Right ventricle myocardium inferior (tissue), 1 donor: ENCODE measurements at regions of chr4 and their contacts with region 1.

Region 1: GRCh38 chr4:141346144-141346543 is 125.4 kb downstream of the ZNF330 start:
- DNase-seq: no peak
- ATAC-seq: peak; percentile 65

Region 2: GRCh38 chr4:141158219-141158618 is 187.9 kb before region 1 on chr4:
- intact Hi-C with region 1: no loop called
- DNase-seq: no peak
- ATAC-seq: no peak

Region 3: GRCh38 chr4:141643557-141643956 is 297.4 kb after region 1 on chr4:
- intact Hi-C with region 1: loop called (anchors 10 kb)
- DNase-seq: no peak
- ATAC-seq: no peak

Region 4: GRCh38 chr4:141711014-141711610 is 365.0 kb after region 1 on chr4:
- intact Hi-C with region 1: loop called (anchors 5 kb)
- DNase-seq: no peak
- ATAC-seq: no peak